ENCODE measurements at regions of chr12 and their contacts with region 1.

Region 1: GRCh38 chr12:120356567-120357030 is 12.4 kb downstream of the MSI1 start:
- DNase-seq: peak; percentile 89 to 96 (median 95)
- ATAC-seq: peak; percentile 97
- H3K4me3 ChIP-seq: no peak overlapping the region
- H3K27ac ChIP-seq: no peak overlapping the region
- H3K4me1 ChIP-seq: peaks cover 0 to 19% of the 10 kb centered on the region in 2 experiments; a peak in 3 of 5 replicates
- H3K27me3 ChIP-seq: peaks cover 15 to 45% of the 10 kb centered on the region in 2 experiments; a peak in 4 of 5 replicates
- CTCF ChIP-seq: peak; percentile 90 to 96 (median 95)
- EP300 ChIP-seq: 0 out of 2 replicates have a peak, but pooled peaks have one; percentile 21
- POLR2A ChIP-seq: no peak
- RAD21 ChIP-seq: peak; percentile 90 to 98

Region 2: DNA sequence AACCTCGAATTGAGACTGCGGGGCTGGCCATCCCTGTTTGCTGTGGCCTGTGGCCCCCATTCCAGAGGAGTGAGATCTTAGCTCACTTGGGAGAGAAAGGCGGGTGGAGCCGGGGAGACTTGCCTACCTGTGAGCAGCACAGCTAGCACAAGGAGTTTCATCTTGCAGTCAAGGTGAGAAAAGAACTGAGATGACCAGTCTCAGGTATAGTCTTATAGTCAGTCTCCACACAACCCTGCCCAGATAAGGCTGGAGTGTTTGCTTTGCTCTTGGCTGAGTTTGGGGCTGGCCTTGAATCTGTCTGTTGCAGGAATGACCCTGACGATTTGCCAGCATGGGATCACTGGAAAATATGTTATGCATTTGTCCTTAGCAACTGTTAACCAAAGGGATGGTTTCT is 29.0 kb before region 1 on chr12 and contains the start of gene PLA2G1B:
- CTCF ChIA-PET with region 1: no interaction called
- POLR2A ChIA-PET with region 1: interaction called, 4 read pairs
- in situ Hi-C with region 1: no loop called
- intact Hi-C with region 1: loop called (anchors 2 kb)
- DNase-seq: no peak
- ATAC-seq: no peak
- H3K4me3 ChIP-seq: no peak within 1 kb of the TSS
- H3K27ac ChIP-seq: no peak within 1 kb of the TSS
- H3K4me1 ChIP-seq: peaks cover 0 to 5% of the 10 kb centered on the region in 2 experiments; a peak in 3 of 5 replicates
- H3K27me3 ChIP-seq: peaks cover 19 to 20% of the 10 kb centered on the region in 2 experiments; a peak in 3 of 5 replicates
- CTCF ChIP-seq: no peak
- EP300 ChIP-seq: no peak
- POLR2A ChIP-seq: no peak
- RAD21 ChIP-seq: no peak
- polyA plus RNA-seq, gene PLA2G1B: not detected

Region 3: GRCh38 chr12:120692524-120693033 is 336.0 kb after region 1 on chr12:
- CTCF ChIA-PET with region 1: no interaction called
- POLR2A ChIA-PET with region 1: no interaction called
- in situ Hi-C with region 1: no loop called
- intact Hi-C with region 1: no loop called
- DNase-seq: no peak
- ATAC-seq: no peak
- H3K4me3 ChIP-seq: no peak overlapping the region
- H3K27ac ChIP-seq: no peak overlapping the region
- H3K4me1 ChIP-seq: peaks cover 7 to 19% of the 10 kb centered on the region in 2 experiments; a peak in 3 of 5 replicates
- H3K27me3 ChIP-seq: no peaks in the 10 kb centered on the region
- CTCF ChIP-seq: no peak
- EP300 ChIP-seq: no peak
- POLR2A ChIP-seq: no peak
- RAD21 ChIP-seq: no peak

Measured in K562 (cell line).